ENCODE measurements at regions of chr11 and their contacts with region 1.

Region 1: GRCh38 chr11:6022956-6023355 is 7.6 kb downstream of the OR56A1 start:
- DNase-seq: peak; percentile 58
- ATAC-seq: peak; percentile 93
- H3K4me3 ChIP-seq: no peak overlapping the region
- H3K27ac ChIP-seq: no peak overlapping the region
- H3K4me1 ChIP-seq: no peaks in the 10 kb centered on the region
- H3K27me3 ChIP-seq: peaks cover 5% of the 10 kb centered on the region
- CTCF ChIP-seq: peak; percentile 71

Region 2: DNA sequence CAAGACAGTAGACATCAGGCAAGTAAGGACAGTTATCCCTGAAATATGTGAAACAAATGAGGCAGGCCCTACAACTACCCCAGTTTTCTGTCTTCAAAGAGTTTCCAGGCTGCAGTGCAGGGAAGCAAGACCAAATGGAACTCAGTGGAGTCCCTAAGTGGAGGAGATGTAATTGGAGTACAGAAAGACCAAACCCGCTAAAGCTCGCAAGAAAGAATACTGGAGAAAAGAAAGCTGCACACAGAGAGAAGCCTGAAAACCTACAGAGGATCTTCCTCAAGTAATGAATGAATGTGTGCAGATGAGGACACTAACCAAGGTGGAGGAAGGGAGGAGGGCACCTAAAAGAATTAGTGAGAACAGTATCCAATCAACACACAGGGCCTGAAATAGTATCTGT is 82.2 kb before region 1 on chr11:
- CTCF ChIA-PET with region 1: no interaction called
- POLR2A ChIA-PET with region 1: no interaction called
- in situ Hi-C with region 1: no loop called
- intact Hi-C with region 1: no loop called
- DNase-seq: no peak
- ATAC-seq: no peak
- H3K4me3 ChIP-seq: no peak overlapping the region
- H3K27ac ChIP-seq: no peak overlapping the region
- H3K4me1 ChIP-seq: no peaks in the 10 kb centered on the region
- H3K27me3 ChIP-seq: no peaks in the 10 kb centered on the region; the same call in 1 of the 2 replicates
- CTCF ChIP-seq: no peak

Region 3: DNA sequence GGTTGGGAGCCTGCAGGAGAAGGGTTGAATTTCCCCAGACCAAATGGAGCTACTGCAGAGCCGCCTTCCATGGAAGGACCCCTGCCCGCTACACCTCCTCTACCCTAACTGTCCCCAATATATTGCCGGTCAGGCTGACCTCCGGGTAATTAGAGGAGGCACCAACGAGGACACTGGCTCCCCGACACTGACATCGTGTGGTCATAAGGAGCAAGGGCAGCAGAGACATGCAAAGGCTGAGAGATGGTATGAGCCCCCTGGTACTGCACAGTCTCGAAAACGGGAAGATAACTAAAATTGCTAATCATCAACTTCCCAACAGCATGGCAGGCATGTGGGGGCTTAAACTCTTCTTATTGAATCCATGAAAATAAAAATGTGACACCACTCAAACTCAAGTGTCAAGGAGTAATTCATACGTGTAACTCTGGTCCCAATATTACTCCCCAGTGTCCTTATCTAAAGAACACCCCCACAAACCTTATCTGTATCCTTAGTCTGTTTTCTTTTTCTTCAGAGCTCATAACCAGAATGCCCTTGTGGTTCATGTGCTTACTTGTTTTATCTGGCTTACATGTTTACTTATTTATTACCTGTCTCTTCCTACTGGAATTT is 293.0 kb after region 1 on chr11:
- CTCF ChIA-PET with region 1: no interaction called
- POLR2A ChIA-PET with region 1: no interaction called
- in situ Hi-C with region 1: no loop called
- intact Hi-C with region 1: loop called (anchors 1 kb)
- DNase-seq: no peak
- ATAC-seq: peak; percentile 57
- H3K4me3 ChIP-seq: no peak overlapping the region
- H3K27ac ChIP-seq: no peak overlapping the region
- H3K4me1 ChIP-seq: peaks cover 2% of the 10 kb centered on the region
- H3K27me3 ChIP-seq: peaks cover 23% of the 10 kb centered on the region
- CTCF ChIP-seq: peak; percentile 98

Region 4: GRCh38 chr11:6353367-6353987 is 330.5 kb after region 1 on chr11:
- CTCF ChIA-PET with region 1: no interaction called
- POLR2A ChIA-PET with region 1: no interaction called
- in situ Hi-C with region 1: no loop called
- intact Hi-C with region 1: loop called (anchors 2 kb)
- DNase-seq: peak; percentile 55
- ATAC-seq: peak; percentile 86
- H3K4me3 ChIP-seq: no peak overlapping the region
- H3K27ac ChIP-seq: no peak overlapping the region
- H3K4me1 ChIP-seq: no peaks in the 10 kb centered on the region
- H3K27me3 ChIP-seq: no peaks in the 10 kb centered on the region
- CTCF ChIP-seq: peak; percentile 99